CD8-positive, alpha-beta memory T cell (primary cell): ENCODE measurements at regions of chr7 and their contacts with region 1.

Region 1: DNA sequence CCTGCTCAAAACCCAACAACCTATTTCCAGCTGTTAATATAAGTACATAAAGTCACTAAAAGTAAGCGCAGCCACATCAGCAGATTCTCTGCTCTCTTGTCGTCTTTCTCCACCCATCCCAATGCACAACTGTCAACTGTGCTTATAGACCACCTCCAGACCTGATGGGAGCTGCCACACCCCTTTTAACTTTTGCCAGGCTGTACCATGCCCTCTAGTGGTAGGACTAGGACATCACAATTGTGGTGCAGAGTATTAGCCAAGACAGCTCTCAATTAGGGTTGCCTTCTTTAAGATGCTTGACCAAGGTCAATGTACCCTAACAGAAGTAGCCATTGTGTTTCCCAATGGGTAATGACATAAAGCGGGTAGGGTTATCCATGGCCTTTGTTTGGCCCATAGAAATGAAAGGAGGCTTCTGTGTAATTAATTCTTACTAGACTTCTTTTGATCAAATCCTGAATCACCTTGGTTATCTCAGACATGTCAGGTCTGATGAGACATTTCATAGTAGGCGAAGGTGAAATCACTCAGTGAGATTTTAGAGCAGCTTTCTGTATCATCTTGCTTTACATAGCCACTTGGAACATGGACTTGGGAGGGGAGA is 68.1 kb downstream of the SCRN1 start:
- DNase-seq: peak in 4 of 5 donors; percentile 7 to 49 (median 38)
- H3K4me3 ChIP-seq: no peak overlapping the region
- H3K4me3 Mint-ChIP-seq: no peak overlapping the region
- H3K27ac ChIP-seq: no peak overlapping the region
- H3K27ac Mint-ChIP-seq: no peak overlapping the region
- H3K4me1 ChIP-seq: no peaks in the 10 kb centered on the region
- H3K4me1 Mint-ChIP-seq: no peaks in the 10 kb centered on the region
- H3K27me3 ChIP-seq: no peaks in the 10 kb centered on the region
- H3K27me3 Mint-ChIP-seq: peaks cover 7 to 33% of the 10 kb centered on the region in 2 donors

Region 2: GRCh38 chr7:28921822-28922221 is 999.7 kb before region 1 on chr7:
- CTCF ChIA-PET with region 1: interaction called, 12 read pairs
- POLR2A ChIA-PET with region 1: no interaction called
- DNase-seq: peak in 4 of 5 donors; percentile 10 to 50 (median 29)
- H3K4me3 ChIP-seq: no peak overlapping the region
- H3K4me3 Mint-ChIP-seq: no peak overlapping the region
- H3K27ac ChIP-seq: no peak overlapping the region
- H3K27ac Mint-ChIP-seq: peak overlapping the region in 1 of 8 donors; percentile 30
- H3K4me1 ChIP-seq: peaks cover 10% of the 10 kb centered on the region
- H3K4me1 Mint-ChIP-seq: peaks cover 20 to 23% (median 20%) of the 10 kb centered on the region in 3 donors
- H3K27me3 ChIP-seq: no peaks in the 10 kb centered on the region
- H3K27me3 Mint-ChIP-seq: peaks cover 0 to under 1% of the 10 kb centered on the region in 2 donors

Region 3: DNA sequence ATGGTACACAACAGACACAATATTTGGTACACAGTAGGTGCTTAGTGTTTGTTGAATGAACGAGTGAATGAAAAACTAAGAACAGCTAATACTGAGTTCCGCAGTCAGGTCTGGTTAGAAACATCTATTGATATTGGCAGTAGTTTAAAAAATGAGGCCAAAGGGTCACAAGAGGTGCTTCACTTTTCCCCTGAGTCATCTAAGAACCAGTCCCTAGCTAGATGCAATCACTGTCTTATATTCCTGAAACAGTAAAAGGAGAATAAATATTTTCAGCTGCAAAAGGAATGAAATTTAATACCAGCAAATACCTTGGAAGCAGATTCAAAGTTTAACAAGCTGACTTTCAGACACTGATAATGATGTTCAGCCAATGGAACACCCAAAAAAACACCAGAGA is 13.6 kb after region 1 on chr7:
- CTCF ChIA-PET with region 1: interaction called, 20 read pairs
- POLR2A ChIA-PET with region 1: no interaction called
- DNase-seq: no peak
- H3K4me3 ChIP-seq: no peak overlapping the region
- H3K4me3 Mint-ChIP-seq: no peak overlapping the region
- H3K27ac ChIP-seq: no peak overlapping the region
- H3K27ac Mint-ChIP-seq: no peak overlapping the region
- H3K4me1 ChIP-seq: no peaks in the 10 kb centered on the region
- H3K4me1 Mint-ChIP-seq: no peaks in the 10 kb centered on the region
- H3K27me3 ChIP-seq: no peaks in the 10 kb centered on the region
- H3K27me3 Mint-ChIP-seq: peaks cover 0 to 12% of the 10 kb centered on the region in 2 donors